ENCODE measurements at regions of chr1 and their contacts with region 1.

Region 1: GRCh38 chr1:214538496-214538895 is 12.9 kb downstream of the PTPN14 start:
- DNase-seq: no peak

Region 2: DNA sequence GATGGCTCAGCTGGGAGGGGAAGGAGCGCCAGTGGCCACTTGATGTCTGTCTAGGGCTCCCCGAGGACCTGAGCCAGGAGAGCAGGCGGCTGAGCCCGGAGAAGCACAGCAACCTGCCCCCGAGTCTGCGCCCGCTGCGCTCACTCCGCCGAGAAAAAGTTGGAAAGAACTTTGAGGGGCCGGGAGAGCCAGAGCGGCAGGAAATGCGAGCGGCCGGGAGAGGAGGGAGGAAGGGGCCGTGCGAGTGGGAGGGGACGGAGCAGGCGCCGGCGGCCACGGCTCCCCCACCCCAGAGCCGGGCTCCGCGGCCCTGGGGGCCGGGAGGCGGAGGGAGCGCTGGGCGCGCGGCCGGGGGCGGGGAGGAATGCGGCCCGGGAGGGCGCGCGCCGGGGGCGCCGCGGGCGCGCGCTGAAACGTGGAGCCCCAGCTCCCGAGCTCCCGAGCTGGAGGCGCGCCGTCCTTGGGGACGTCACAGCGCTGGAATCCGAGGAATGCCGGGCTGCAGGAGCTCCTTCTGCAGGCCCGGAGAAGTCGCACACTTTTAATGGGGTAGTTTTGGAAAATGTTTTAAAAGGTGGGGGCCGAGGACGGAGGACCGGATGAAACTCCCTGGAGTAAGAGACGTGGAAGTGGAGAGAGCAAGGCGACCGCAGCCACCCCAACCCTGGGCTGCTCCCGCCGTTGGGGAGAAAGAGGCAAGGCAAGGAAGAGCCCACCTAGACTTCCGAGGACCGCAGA is 13.1 kb after region 1 on chr1 and contains the start of gene PTPN14:
- CTCF ChIA-PET with region 1: interaction called, 20 read pairs
- POLR2A ChIA-PET with region 1: interaction called, 9 read pairs
- DNase-seq: peak; percentile 92

Measured in HEK293T (cell line).